Right cardiac atrium (tissue), 5 donors: ENCODE measurements at regions of chr1 and their contacts with region 1.

Region 1: GRCh38 chr1:68120136-68120791 is 69.8 kb upstream of the DIRAS3 start:
- DNase-seq: no peak
- ATAC-seq: peak; percentile 68 to 69
- H3K4me3 ChIP-seq: no peak overlapping the region
- H3K27ac ChIP-seq: no peak overlapping the region
- H3K4me1 ChIP-seq: no peaks in the 10 kb centered on the region
- H3K27me3 ChIP-seq: no peaks in the 10 kb centered on the region

Region 2: GRCh38 chr1:67766141-67766978 is 353.9 kb before region 1 on chr1:
- intact Hi-C with region 1: loop called in 2 of 4 experiments (anchors 10 kb)
- DNase-seq: peak in 2 of 3 donors; percentile 40 to 73
- ATAC-seq: peak; percentile 75 to 76
- H3K4me3 ChIP-seq: peak overlapping the region; percentile 24
- H3K27ac ChIP-seq: no peak overlapping the region
- H3K4me1 ChIP-seq: peaks cover 3% of the 10 kb centered on the region
- H3K27me3 ChIP-seq: no peaks in the 10 kb centered on the region

Region 3: GRCh38 chr1:68180441-68181164 is 60.3 kb after region 1 on chr1:
- intact Hi-C with region 1: no loop called
- DNase-seq: no peak
- ATAC-seq: no peak
- H3K4me3 ChIP-seq: no peak overlapping the region
- H3K27ac ChIP-seq: no peak overlapping the region
- H3K4me1 ChIP-seq: no peaks in the 10 kb centered on the region
- H3K27me3 ChIP-seq: no peaks in the 10 kb centered on the region

Region 4: GRCh38 chr1:68232354-68233148 is 112.3 kb after region 1 on chr1 and contains the start of gene WLS:
- intact Hi-C with region 1: loop called in 2 of 4 experiments (anchors 5 to 10 kb)
- DNase-seq: peak; percentile 82 to 93 (median 92)
- ATAC-seq: peak; percentile 92 to 93
- H3K4me3 ChIP-seq: peak within 1 kb of the TSS; percentile 99
- H3K27ac ChIP-seq: peak within 1 kb of the TSS; percentile 77
- H3K4me1 ChIP-seq: peaks cover 7% of the 10 kb centered on the region
- H3K27me3 ChIP-seq: no peaks in the 10 kb centered on the region
- total RNA-seq, gene WLS: 73.4 to 102 (median 102) TPM

Region 5: DNA sequence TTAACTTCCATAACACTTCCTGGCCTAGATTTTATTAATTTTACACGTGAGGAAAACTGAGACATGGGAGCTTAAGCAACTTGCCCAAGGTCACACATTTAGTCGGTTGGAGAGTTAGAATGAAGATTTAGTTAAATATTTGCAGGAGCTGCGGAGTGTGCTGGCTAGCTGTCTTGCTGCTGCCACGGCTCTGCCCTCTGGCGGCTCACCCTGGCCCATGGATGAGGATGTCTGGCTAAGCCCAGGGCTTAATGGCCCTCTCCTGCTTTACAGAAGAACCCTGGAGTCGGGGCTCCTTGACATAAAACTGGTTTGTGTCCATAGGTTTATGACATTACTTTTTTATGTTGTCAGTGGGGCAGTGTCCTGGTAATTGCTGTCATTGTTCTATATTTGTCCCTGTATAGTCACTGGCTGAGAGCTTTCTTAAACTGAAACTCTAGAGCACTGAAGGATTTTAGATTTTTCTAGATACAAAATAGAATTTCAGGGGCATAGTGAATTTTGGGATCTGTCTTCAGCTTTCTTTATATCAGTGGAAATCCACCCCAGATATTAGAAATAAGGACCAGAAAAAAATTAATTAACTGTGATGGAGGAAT is 200.9 kb after region 1 on chr1:
- intact Hi-C with region 1: loop called (anchors 2 to 10 kb)
- DNase-seq: peak; percentile 64 to 89 (median 86)
- ATAC-seq: peak; percentile 92 to 95
- H3K4me3 ChIP-seq: no peak overlapping the region
- H3K27ac ChIP-seq: no peak overlapping the region
- H3K4me1 ChIP-seq: no peaks in the 10 kb centered on the region
- H3K27me3 ChIP-seq: no peaks in the 10 kb centered on the region

Region 6: GRCh38 chr1:68340951-68341350 is 220.7 kb after region 1 on chr1:
- intact Hi-C with region 1: loop called (anchors 2 to 5 kb)
- DNase-seq: no peak
- ATAC-seq: no peak
- H3K4me3 ChIP-seq: no peak overlapping the region
- H3K27ac ChIP-seq: no peak overlapping the region
- H3K4me1 ChIP-seq: no peaks in the 10 kb centered on the region
- H3K27me3 ChIP-seq: no peaks in the 10 kb centered on the region

Region 7: GRCh38 chr1:68346188-68346808 is 226.0 kb after region 1 on chr1:
- intact Hi-C with region 1: loop called (anchors 2 to 5 kb)
- DNase-seq: no peak
- ATAC-seq: no peak
- H3K4me3 ChIP-seq: no peak overlapping the region
- H3K27ac ChIP-seq: no peak overlapping the region
- H3K4me1 ChIP-seq: no peaks in the 10 kb centered on the region
- H3K27me3 ChIP-seq: no peaks in the 10 kb centered on the region